ENCODE measurements at regions of chr7 and their contacts with region 1.

Region 1: GRCh38 chr7:31051598-31052486 is at the start of gene ADCYAP1R1:
- DNase-seq: no peak
- ATAC-seq: no peak
- H3K4me3 ChIP-seq: no peak within 1 kb of the TSS
- H3K4me3 Mint-ChIP-seq: peak within 1 kb of the TSS in 4 of 10 donors; percentile 15 to 64 (median 45)
- H3K27ac ChIP-seq: no peak within 1 kb of the TSS
- H3K27ac Mint-ChIP-seq: no peak within 1 kb of the TSS
- H3K4me1 ChIP-seq: no peaks in the 10 kb centered on the region
- H3K4me1 Mint-ChIP-seq: peaks cover 0 to 9% (median 5%) of the 10 kb centered on the region in 7 donors
- H3K27me3 ChIP-seq: no peaks in the 10 kb centered on the region
- H3K27me3 Mint-ChIP-seq: peaks cover 33 to 53% (median 47%) of the 10 kb centered on the region in 5 donors
- total RNA-seq, gene ADCYAP1R1: not detected

Region 2: GRCh38 chr7:30893357-30893756 is 158.5 kb before region 1 on chr7:
- CTCF ChIA-PET with region 1: no interaction called
- POLR2A ChIA-PET with region 1: no interaction called
- intact Hi-C with region 1: no loop called
- DNase-seq: no peak
- ATAC-seq: no peak
- H3K4me3 ChIP-seq: no peak overlapping the region
- H3K4me3 Mint-ChIP-seq: no peak overlapping the region
- H3K27ac ChIP-seq: no peak overlapping the region
- H3K27ac Mint-ChIP-seq: no peak overlapping the region
- H3K4me1 ChIP-seq: no peaks in the 10 kb centered on the region
- H3K4me1 Mint-ChIP-seq: no peaks in the 10 kb centered on the region
- H3K27me3 ChIP-seq: no peaks in the 10 kb centered on the region
- H3K27me3 Mint-ChIP-seq: peaks cover 0 to 11% (median 0%) of the 10 kb centered on the region in 5 donors

Region 3: GRCh38 chr7:31020652-31021051 is 31.2 kb before region 1 on chr7:
- CTCF ChIA-PET with region 1: no interaction called
- POLR2A ChIA-PET with region 1: no interaction called
- intact Hi-C with region 1: loop called in 1 of 2 experiments (anchors 1 kb)
- DNase-seq: no peak
- ATAC-seq: no peak
- H3K4me3 ChIP-seq: no peak overlapping the region
- H3K4me3 Mint-ChIP-seq: no peak overlapping the region
- H3K27ac ChIP-seq: no peak overlapping the region
- H3K27ac Mint-ChIP-seq: no peak overlapping the region
- H3K4me1 ChIP-seq: peaks cover 0 to 8% of the 10 kb centered on the region in 2 donors
- H3K4me1 Mint-ChIP-seq: peaks cover 0 to 23% (median 11%) of the 10 kb centered on the region in 7 donors
- H3K27me3 ChIP-seq: no peaks in the 10 kb centered on the region
- H3K27me3 Mint-ChIP-seq: peaks cover 0 to 4% (median 3%) of the 10 kb centered on the region in 5 donors